ENCODE measurements at regions of chr5 and their contacts with region 1.

Region 1: GRCh38 chr5:154405078-154405792 is 40.6 kb upstream of the SAP30L start:
- DNase-seq: peak; percentile 64 to 93 (median 84)

Region 2: GRCh38 chr5:153974131-153974812 is 431.0 kb before region 1 on chr5:
- intact Hi-C with region 1: loop called (anchors 10 kb)
- DNase-seq: peak in 23 of 42 donors; percentile 14 to 77 (median 47)

Region 3: GRCh38 chr5:154072414-154073171 is 332.6 kb before region 1 on chr5:
- intact Hi-C with region 1: loop called (anchors 2 kb)
- DNase-seq: peak; percentile 51 to 95 (median 84)

Region 4: GRCh38 chr5:154189819-154190594 is 215.2 kb before region 1 on chr5:
- intact Hi-C with region 1: loop called (anchors 2 kb)
- DNase-seq: peak; percentile 54 to 95 (median 87)